Caco-2 (cell line): ENCODE measurements at regions of chr12 and their contacts with region 1.

Region 1: DNA sequence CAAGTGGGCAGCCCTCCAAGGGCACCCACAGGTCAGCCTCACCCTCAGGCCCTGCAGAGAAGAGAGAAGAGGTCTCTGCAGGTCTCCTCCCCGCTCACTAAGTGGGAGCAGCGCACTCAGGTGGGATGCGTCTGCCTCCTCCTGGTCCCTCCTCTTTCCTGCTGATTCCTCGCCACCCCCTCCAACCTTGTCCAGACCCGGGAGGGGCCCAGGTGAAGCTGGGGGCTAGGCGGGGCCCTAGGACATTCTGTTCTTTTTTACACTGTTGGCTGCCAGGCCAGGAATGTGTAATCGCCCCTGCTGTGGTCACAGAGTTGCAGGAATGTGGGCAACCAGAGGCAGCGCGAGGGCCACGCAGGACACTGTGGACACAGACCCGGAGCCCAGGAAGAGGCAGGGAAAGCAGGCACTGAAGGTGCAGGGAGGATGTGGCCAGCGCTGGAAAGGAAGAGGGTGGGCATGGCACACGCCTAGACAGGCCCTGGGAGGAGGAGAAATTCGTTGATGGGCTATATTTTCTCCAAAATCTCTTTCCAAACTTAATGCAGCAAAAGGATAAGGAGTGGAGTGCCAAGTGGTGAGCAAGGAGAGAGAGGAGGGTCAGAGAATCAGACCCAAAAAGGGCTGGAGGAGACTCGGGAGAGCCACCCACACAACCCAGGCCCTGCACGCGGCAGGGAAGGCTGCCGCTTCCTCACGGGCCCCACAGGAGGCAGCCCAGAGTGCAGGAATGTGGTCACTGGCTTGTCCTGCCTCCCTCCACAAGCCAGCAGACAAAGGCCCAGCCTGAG is 911 bp upstream of the SCNN1A start:
- DNase-seq: peak; percentile 88 to 89
- H3K4me3 ChIP-seq: no peak overlapping the region
- H3K4me3 Mint-ChIP-seq: peak overlapping the region; percentile 72
- H3K27ac Mint-ChIP-seq: peak overlapping the region; percentile 94
- H3K4me1 ChIP-seq: peaks cover 68% of the 10 kb centered on the region
- H3K4me1 Mint-ChIP-seq: peaks cover 51% of the 10 kb centered on the region
- H3K27me3 ChIP-seq: no peaks in the 10 kb centered on the region
- H3K27me3 Mint-ChIP-seq: no peaks in the 10 kb centered on the region
- CTCF ChIP-seq: peak; percentile 69 to 71

Region 2: GRCh38 chr12:6069437-6070107 is 306.7 kb before region 1 on chr12:
- CTCF ChIA-PET with region 1: no interaction called
- POLR2A ChIA-PET with region 1: no interaction called
- intact Hi-C with region 1: loop called (anchors 10 kb)
- DNase-seq: no peak
- H3K4me3 ChIP-seq: no peak overlapping the region
- H3K4me3 Mint-ChIP-seq: no peak overlapping the region
- H3K27ac Mint-ChIP-seq: no peak overlapping the region
- H3K4me1 ChIP-seq: peaks cover 41% of the 10 kb centered on the region
- H3K4me1 Mint-ChIP-seq: peaks cover 59% of the 10 kb centered on the region
- H3K27me3 ChIP-seq: no peaks in the 10 kb centered on the region
- H3K27me3 Mint-ChIP-seq: no peaks in the 10 kb centered on the region
- CTCF ChIP-seq: no peak

Region 3: DNA sequence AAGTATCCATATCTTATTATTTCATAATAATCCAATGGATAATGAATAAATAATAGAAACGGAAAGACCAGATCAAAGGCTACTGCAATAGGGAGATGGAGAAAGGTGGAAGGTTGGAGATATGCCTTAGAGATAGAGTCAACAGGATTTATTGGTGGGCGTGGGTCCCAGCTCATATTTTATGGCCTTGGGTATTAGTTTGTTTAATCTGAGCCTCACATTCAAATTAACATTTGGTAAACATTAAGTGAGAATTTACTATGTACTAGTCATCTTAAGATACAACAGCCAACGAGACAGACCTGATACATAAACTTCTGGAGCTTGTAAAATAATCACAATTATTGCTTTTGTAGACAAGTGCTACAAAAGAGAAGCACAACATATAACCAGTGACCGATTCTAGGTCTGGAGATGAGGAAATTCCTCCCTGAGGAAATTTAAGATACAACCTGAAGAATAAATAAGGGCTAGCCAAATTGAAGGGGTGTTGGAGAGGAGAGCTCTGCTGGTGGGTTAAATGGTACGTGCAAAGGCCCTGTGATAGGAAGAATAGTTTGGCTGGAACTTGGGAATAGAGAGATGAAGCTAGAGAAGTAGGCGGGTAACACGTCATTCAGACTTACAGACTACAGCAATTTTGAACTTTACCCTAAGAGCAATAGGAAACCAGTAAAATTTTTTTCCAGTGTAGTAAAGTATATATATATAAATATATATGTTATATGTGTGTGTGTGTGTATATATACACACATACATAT is 23.8 kb after region 1 on chr12:
- CTCF ChIA-PET with region 1: no interaction called
- POLR2A ChIA-PET with region 1: no interaction called
- intact Hi-C with region 1: loop called (anchors 1 kb)
- DNase-seq: no peak
- H3K4me3 ChIP-seq: no peak overlapping the region
- H3K4me3 Mint-ChIP-seq: no peak overlapping the region
- H3K27ac Mint-ChIP-seq: no peak overlapping the region
- H3K4me1 ChIP-seq: no peaks in the 10 kb centered on the region
- H3K4me1 Mint-ChIP-seq: peaks cover 7% of the 10 kb centered on the region
- H3K27me3 ChIP-seq: no peaks in the 10 kb centered on the region
- H3K27me3 Mint-ChIP-seq: no peaks in the 10 kb centered on the region
- CTCF ChIP-seq: no peak